Dendritic cell treated with granulocyte-macrophage colony-stimulating factor and Interleukin-4, amounts not matched to agents 40 ng/mL and 50 ng/mL, for 4 days (primary cell): ENCODE measurements at regions of chr5 and their contacts with region 1.

Region 1: DNA sequence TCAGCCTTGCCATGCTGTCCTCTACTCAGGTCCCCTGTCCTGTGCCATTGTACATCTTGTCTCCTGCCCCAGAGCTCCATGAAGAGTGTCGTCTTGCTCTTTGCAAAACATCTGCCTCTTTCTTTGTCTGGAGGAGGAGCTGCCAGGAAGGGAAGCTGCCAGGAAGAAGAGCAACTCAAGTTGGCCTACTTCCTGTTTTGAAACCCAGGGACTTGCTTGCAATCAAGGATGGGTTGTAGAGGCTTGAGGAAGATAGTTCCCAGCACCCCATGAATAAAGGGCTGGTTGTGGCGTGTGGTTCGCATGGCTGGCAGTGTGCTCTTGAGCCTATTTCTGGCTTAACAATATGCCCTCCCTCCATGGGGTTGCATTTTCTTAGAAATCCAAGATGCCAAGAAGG is 53.0 kb upstream of the CPEB4 start:
- H3K4me3 Mint-ChIP-seq: no peak overlapping the region
- H3K27ac Mint-ChIP-seq: peak overlapping the region; percentile 73
- H3K4me1 Mint-ChIP-seq: peaks cover 48% of the 10 kb centered on the region
- H3K27me3 Mint-ChIP-seq: no peaks in the 10 kb centered on the region

Region 2: DNA sequence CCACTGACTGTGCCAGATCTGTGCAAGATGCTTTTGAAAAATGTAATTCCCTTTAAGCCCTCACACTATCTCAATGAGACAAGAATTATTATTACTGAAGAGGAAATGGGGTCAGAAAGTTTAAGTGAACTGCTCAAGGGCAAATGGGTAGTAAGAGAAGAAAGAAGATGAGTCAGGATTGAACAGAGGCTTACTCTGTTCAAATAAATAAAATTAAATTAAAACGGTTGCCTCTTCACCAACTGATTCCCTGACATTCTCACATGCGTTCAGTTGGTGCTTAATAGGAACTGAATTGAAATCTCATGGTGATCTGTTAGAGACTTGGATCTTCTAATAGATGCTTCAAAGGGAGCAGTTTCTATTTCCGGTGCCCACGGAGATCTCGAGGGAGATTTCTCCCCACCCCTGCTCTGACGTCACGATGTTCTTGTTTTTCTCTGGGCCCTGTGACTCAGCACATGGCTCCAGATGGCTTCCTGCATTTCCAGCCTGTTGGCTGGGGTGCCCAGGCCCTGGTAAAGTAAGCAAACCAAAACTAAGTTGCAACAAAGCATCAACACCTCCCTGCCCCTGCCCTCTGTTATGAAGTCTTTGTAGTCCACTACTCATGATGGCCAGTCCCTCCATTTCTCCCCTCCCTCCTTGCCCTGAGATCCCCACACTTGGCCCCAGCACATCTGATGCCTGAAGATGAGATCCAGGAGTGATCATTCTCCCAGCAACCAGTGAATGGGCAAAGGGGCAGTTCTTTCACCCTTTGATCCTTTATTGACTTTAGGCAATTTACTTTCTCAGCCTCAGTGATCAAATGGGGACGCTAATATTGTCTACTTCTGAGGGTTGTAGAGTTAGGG is 53.1 kb before region 1 on chr5:
- intact Hi-C with region 1: loop called (anchors 2 kb)
- H3K4me3 Mint-ChIP-seq: peak overlapping the region; percentile 2
- H3K27ac Mint-ChIP-seq: peak overlapping the region; percentile 96
- H3K4me1 Mint-ChIP-seq: peaks cover 85% of the 10 kb centered on the region
- H3K27me3 Mint-ChIP-seq: no peaks in the 10 kb centered on the region

Region 3: DNA sequence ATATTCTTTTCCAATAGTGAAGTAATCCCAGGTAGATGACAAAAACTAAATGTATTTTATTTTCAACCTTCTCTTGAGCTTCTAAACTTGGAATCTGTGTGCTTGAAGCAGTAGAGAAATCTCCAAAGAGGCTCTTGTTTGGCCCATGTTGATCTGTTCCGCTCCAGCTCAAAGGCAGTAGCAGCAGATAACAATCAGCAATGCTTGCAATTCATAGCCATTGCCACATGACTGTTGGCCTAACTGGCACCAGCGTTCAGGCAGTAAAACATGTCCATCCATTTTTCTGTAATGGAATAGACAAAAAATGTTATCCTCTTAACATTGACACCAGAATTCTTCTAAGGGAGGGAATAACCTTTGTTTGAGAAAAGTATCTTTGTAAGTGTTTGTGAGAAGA is 618.6 kb after region 1 on chr5:
- intact Hi-C with region 1: no loop called
- H3K4me3 Mint-ChIP-seq: no peak overlapping the region
- H3K27ac Mint-ChIP-seq: no peak overlapping the region
- H3K4me1 Mint-ChIP-seq: no peaks in the 10 kb centered on the region
- H3K27me3 Mint-ChIP-seq: no peaks in the 10 kb centered on the region